MCF 10A (cell line): ENCODE measurements at regions of chr2 and their contacts with region 1.

Region 1: GRCh38 chr2:177314194-177314593 is 49.7 kb upstream of the NFE2L2 start:
- DNase-seq: peak; percentile 67
- H3K4me3 Mint-ChIP-seq: no peak overlapping the region
- H3K27ac Mint-ChIP-seq: peak overlapping the region; percentile 95
- H3K4me1 Mint-ChIP-seq: peaks cover 30% of the 10 kb centered on the region
- H3K27me3 Mint-ChIP-seq: no peaks in the 10 kb centered on the region
- CTCF ChIP-seq: no peak

Region 2: GRCh38 chr2:177169810-177170514 is 144.2 kb before region 1 on chr2:
- CTCF ChIA-PET with region 1: interaction called, 20 read pairs
- POLR2A ChIA-PET with region 1: interaction called, 26 read pairs
- intact Hi-C with region 1: no loop called
- DNase-seq: peak; percentile 95
- H3K4me3 Mint-ChIP-seq: peak overlapping the region; percentile 3
- H3K27ac Mint-ChIP-seq: peak overlapping the region; percentile 91
- H3K4me1 Mint-ChIP-seq: peaks cover 28% of the 10 kb centered on the region
- H3K27me3 Mint-ChIP-seq: no peaks in the 10 kb centered on the region
- CTCF ChIP-seq: no peak

Region 3: GRCh38 chr2:177190941-177191340 is 123.3 kb before region 1 on chr2:
- CTCF ChIA-PET with region 1: no interaction called
- POLR2A ChIA-PET with region 1: no interaction called
- intact Hi-C with region 1: no loop called
- DNase-seq: no peak
- H3K4me3 Mint-ChIP-seq: no peak overlapping the region
- H3K27ac Mint-ChIP-seq: no peak overlapping the region
- H3K4me1 Mint-ChIP-seq: peaks cover 13% of the 10 kb centered on the region
- H3K27me3 Mint-ChIP-seq: no peaks in the 10 kb centered on the region
- CTCF ChIP-seq: no peak

Region 4: DNA sequence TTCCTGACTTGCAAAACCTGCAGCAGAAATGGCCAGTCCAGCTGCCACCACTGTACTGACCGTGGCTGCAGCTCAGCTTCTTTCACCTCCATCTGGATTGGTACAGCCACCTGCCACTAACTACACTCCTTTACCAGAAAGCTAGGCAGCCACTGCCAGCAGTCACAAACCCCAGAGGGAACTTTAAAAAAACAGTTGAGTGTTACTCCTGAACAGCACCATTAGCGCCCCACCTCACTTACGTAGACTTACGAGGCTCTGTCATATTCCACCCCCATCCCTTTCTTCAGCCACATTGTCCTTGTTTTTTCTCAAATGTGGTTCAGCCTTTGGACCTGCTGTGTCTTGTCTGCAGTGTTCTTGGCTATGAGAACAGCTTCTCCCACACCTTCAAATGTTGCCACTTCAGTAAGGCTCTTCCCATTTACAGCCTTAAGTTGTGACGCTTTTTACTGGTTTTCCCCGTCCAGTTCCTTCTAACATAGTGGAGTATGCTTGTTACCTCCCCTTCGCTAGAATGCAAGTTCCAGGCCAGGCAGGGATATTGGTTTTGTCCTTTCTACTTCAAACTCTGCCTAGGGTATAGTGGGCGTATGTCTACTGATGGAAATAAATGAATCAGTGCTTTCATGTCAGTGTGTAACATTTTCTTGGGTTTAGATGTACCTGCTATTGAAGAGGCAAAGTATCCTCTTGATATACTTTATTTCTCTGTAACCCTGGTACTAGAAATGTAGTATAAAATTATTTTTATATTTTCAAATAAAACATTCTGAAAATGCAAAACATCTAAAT is 84.5 kb before region 1 on chr2:
- CTCF ChIA-PET with region 1: no interaction called
- POLR2A ChIA-PET with region 1: interaction called, 19 read pairs
- intact Hi-C with region 1: no loop called
- DNase-seq: no peak
- H3K4me3 Mint-ChIP-seq: no peak overlapping the region
- H3K27ac Mint-ChIP-seq: peak overlapping the region; percentile 35
- H3K4me1 Mint-ChIP-seq: peaks cover 21% of the 10 kb centered on the region
- H3K27me3 Mint-ChIP-seq: no peaks in the 10 kb centered on the region
- CTCF ChIP-seq: no peak

Region 5: DNA sequence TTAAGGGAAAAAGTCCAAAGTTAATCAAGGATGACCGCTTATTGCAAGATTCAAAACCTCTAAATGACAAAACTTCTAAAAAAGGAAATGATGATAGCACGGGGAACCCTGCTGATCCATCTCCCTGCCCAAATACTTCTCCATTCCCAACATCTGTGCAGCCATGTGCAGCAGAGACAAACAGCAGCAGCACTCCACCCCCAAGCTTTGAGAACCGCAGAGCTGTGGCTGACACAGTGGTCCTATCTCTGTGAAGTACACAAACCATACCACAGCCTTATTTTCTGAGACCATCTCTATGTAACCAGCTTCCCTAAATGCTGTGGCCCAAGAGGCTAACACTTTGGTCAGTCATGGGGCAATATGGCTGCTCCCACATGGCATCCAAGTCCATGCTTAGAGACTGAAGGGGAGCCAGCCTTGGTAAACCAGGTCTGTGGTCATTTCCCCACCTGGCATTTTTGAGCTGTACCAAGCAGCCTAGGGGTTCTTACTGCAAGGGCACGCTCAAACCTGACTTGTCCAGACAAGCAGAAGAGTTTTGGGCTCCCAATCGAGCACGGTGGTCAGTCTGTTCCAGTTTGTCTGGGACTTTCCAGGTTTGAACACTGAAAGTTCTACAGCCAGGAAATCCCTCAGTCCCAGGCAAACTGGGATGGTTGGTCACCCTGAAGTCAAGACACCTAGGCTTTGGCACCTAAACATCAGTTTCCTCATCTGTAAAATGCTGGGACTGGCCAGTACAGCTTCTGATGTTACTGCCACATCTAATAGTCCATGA is 32.6 kb before region 1 on chr2:
- CTCF ChIA-PET with region 1: interaction called, 5 read pairs
- POLR2A ChIA-PET with region 1: interaction called, 23 read pairs
- intact Hi-C with region 1: no loop called
- DNase-seq: peak; percentile 76
- H3K4me3 Mint-ChIP-seq: no peak overlapping the region
- H3K27ac Mint-ChIP-seq: peak overlapping the region; percentile 54
- H3K4me1 Mint-ChIP-seq: peaks cover 10% of the 10 kb centered on the region
- H3K27me3 Mint-ChIP-seq: no peaks in the 10 kb centered on the region
- CTCF ChIP-seq: no peak

Region 6: GRCh38 chr2:177325270-177325929 is 11.2 kb after region 1 on chr2:
- CTCF ChIA-PET with region 1: interaction called, 4 read pairs
- POLR2A ChIA-PET with region 1: interaction called, 14 read pairs
- intact Hi-C with region 1: no loop called
- DNase-seq: no peak
- H3K4me3 Mint-ChIP-seq: no peak overlapping the region
- H3K27ac Mint-ChIP-seq: no peak overlapping the region
- H3K4me1 Mint-ChIP-seq: no peaks in the 10 kb centered on the region
- H3K27me3 Mint-ChIP-seq: no peaks in the 10 kb centered on the region
- CTCF ChIP-seq: no peak

Region 7: GRCh38 chr2:177445200-177445599 is 131.0 kb after region 1 on chr2:
- CTCF ChIA-PET with region 1: no interaction called
- POLR2A ChIA-PET with region 1: no interaction called
- intact Hi-C with region 1: no loop called
- DNase-seq: no peak
- H3K4me3 Mint-ChIP-seq: no peak overlapping the region
- H3K27ac Mint-ChIP-seq: no peak overlapping the region
- H3K4me1 Mint-ChIP-seq: no peaks in the 10 kb centered on the region
- H3K27me3 Mint-ChIP-seq: no peaks in the 10 kb centered on the region
- CTCF ChIP-seq: no peak